ENCODE measurements at regions of chr11 and their contacts with region 1.

Region 1: DNA sequence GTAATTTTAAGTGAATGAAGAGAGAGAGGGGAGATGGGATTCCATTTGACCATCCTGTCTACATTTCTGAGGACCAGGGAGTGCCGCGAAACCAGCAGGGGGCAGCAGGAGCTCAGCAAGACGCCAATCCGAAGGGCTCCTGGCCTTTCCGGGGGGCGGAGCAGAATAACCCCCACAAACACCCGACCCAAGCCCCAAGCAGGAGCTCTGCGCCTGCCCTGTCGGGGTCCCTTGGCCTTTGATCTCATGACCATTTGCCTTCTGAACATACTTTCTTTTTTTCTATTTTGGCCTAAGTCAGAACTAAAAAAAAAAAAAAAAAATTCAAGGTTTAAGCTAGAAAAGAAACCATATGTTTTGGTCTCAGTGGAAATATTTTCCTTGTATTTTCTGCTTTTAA is 21.9 kb upstream of the SCN2B start:
- DNase-seq: peak; percentile 90
- ATAC-seq: peak; percentile 61

Region 2: DNA sequence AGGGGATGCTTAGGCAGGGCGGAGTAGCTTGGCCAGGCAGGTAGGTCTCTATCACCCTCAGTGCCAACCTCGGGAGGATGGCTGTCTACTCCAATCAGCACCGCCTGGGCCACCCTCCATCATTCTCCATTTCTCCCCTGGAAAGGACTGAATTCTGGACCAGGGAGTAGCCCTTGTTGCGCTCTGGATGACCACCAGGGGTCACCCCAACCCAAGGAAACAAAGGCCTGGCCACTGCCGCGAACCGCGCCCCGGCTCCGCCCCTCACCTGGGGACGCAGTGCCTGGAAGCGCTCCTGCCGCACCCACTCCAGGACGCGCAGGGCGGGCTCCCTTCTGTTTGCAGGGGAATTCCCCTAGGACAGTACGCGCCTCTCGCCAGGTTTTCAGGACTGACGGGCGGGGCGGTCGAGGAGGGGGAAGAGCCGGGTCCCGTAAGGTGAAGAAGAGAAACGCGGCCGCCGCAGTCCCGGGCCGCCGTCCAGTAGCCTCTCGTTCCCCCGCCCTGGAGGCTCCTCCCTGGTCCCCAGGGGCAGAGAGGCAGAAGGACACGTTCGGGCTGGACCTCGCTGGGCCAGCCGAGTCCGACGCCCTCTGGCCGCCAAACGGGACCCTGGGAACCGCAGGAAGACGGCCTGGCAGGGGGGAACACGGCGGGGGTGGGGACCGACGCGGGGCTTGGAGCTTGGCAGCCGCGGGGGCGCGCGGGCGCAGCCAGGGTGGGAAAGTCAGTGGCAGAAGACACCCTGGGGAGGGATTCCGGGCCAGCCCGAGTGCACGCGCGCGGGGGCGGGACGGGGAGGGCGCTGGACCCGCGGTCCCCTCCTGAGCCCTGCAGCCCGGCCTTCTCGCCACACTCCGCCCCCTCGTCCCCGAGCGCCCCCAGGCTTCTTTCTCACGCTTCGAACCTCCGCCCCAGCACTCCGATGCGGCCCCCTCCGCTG is 52.8 kb before region 1 on chr11:
- intact Hi-C with region 1: loop called (anchors 2 kb)
- DNase-seq: peak; percentile 92
- ATAC-seq: peak; percentile 89

Region 3: DNA sequence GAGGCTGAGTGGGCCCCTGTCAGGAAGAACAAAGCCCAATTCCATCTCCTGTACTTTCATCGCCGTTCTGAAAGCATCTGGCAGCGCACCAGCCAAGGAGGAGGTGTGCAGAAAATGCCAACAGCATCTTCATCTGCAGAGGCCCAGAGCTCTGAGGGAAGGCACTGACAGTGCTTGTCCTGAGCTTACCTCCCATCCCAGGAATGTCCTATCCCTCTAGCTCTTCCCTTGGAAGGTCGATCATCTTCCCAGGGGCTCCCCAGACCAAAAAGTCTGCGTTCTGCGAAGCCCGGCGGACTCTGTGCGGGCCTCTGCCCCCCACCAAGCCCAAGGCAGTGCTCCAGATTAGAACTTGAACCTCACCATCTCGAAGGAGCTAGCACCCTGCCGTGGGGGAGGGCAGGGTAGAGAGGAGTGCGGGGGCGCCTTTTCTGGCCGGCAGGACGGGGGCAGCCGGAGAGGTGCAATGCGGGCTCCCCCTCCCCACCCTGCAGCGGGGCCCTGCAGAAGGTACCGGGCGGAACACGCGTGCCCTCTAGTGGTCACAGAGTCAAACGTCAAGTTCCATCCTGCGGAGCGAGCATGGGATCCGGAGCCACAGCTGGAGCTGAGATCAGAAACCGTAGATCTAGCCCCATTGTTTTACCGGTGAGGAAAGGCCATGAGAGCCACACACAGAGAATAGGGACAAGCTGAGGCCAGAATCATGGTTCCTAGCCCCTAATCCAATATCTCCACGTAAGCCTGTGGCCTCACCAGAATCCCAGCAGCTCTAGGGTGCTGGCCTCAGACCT is 26.9 kb before region 1 on chr11:
- intact Hi-C with region 1: loop called (anchors 2 kb)
- DNase-seq: peak; percentile 88
- ATAC-seq: peak; percentile 66

Region 4: DNA sequence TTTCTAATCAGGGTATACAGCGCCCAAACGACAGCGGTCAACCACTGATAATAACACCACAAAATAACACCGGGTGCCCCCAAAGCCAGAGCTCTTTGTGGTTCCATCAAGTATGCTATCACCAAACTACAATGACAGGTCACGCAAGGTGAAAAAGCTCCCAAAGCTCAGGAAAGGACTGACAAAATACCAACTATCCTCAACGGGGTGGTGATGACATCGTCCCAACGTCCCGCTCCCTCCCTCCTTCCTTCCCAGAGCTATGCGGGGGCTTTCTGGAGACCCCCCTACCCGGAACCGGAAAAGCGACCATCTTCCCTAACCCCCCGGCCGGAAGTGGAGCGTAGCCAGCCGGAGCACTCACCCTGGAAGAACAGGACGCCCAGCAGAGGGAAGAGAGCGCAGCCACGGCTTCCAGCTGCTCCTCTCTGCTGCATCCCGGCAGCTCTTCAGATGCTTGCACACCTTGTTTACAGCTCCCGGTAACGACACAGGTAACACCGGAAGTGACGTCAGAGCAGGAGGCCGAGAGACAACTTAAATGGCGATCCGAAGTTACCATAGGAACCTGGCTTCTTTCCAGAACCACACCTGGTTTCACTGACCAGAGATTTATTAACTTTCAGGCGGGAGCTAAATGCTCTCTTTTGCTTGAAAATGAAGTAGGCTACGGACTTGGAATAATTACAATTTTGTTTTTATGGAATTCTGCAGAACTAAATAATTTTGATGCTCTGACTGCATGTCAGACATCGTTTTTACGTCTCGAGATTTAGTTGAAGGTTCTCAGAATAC is 53.7 kb after region 1 on chr11 and contains the start of gene MPZL3:
- intact Hi-C with region 1: loop called (anchors 5 kb)
- DNase-seq: peak; percentile 81
- ATAC-seq: peak; percentile 76
- total RNA-seq, gene MPZL3: 2.2 TPM

Region 5: DNA sequence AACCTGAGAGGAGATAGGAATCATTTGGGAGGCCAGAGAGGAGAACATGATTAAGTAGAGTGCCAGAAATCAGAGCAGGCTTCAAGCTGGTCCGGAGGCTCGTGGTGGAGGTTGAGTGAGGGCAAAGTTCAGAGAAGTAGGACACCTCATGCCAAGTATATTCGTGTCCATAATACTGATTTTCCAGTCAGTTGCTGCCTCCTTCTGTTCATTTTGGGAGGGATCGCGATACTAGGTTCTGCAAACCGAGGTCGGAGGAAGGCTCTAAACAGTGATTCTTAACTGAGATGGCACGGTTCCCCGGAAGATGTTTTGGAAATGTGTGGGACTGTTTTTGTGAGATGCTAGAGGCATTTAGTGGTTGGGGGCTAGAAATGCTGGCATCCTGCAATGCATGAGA is 92.6 kb after region 1 on chr11:
- intact Hi-C with region 1: loop called (anchors 1 kb)
- DNase-seq: no peak
- ATAC-seq: peak; percentile 75

Region 6: DNA sequence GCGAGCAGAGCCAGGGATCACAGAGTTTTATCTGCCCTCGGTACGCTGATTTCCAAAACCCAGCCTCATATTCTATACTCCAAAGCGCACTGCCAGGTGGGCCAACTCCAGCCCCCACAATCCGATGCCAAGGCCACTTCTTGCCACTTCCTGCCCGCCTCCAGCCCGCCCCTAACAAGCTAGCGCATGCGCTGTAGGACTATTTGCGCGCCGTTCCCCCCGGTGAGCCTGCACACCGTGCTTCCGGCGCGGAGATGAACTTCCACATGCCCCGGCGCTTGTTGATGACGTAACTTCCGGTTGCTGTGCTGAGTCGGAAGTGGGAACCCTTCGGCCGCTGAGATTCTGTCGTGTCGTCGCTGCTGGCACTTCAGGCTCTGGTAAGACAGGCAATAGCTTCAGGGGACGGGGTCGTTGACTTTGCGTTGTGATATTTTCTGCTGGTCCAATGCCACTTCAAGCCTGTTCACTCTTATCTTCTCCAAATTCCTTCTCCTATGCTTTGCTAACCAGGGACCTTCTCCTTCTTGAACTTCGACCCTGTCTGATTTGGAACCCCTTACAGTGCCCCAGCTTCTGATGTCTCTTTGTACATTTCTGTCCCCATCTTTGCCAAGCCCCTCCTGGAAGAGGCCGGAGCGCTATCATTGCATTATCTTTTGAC is 161.1 kb after region 1 on chr11 and contains the start of gene UBE4A:
- intact Hi-C with region 1: loop called (anchors 2 kb)
- DNase-seq: peak; percentile 98
- ATAC-seq: peak; percentile 96
- total RNA-seq, gene UBE4A: 32.0 TPM

Region 7: DNA sequence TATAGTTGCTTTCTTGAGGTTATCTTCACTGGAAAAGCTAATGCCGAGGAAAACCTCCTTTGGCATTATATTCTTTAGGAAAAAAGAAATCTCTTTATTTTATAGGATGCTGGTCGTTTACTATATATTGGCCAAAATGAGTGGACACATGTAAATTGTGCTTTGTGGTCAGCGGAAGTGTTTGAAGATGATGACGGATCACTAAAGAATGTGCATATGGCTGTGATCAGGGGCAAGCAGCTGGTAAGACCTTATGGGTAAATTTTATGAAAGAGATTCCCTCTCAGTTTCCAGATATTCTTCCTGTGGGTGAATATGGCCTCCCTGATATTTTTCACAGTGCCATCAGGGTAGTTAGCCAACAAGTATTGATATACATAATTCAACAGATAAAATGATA is 299.5 kb after region 1 on chr11:
- intact Hi-C with region 1: loop called (anchors 10 kb)
- DNase-seq: no peak
- ATAC-seq: no peak